ENCODE measurements at regions of chr13 and their contacts with region 1.

Region 1: GRCh38 chr13:22082437-22083100 is 411.7 kb downstream of the FGF9 start:
- DNase-seq: no peak
- H3K4me3 ChIP-seq: no peak overlapping the region
- H3K4me3 Mint-ChIP-seq: peak overlapping the region; percentile 2
- H3K27ac Mint-ChIP-seq: peak overlapping the region; percentile 13
- H3K4me1 ChIP-seq: peaks cover 12% of the 10 kb centered on the region
- H3K4me1 Mint-ChIP-seq: peaks cover 9% of the 10 kb centered on the region
- H3K27me3 ChIP-seq: no peaks in the 10 kb centered on the region
- H3K27me3 Mint-ChIP-seq: no peaks in the 10 kb centered on the region
- CTCF ChIP-seq: no peak

Region 2: DNA sequence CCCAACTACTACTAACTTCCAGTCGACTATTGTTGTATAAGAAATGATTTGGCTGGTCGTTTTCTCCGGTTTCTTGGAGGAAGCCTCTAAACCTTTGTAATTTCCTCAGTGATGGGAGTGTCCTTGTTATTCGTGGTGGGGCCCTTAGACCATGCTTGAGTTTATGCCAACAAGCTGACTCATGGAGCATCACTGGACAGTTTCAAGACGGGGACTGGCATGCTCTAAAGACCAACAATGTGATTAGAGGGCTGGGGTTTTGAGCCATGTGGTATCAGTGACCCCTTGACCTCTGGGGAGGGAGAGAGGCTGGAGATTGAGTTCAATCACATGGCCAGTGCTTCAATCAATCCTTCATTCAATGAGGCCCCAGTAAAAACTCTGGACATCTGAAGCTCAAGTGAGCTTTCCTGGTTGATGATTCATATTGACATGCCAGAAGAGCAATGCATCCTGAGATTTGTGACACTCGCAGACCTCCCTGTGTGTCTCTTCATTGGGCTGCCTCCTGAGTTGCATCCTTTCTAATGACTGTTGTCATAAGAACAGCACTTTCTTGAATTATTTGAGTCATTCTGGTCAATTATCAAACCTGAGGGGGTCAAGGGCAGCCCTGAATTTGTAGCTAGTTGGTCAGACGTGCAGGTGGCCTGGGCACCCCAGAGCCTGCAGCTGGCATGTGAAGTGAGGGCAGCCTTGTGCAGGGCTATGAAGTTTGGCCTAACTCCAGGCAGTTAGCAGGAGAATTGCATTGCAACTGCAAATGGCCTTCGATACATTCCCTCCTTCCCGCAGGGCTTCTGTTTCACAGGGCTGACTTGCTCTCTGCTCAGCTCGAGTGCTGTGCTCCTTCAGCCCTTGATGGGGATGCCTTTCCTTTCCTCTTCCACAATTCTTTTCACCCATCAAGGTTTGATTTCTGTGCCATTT is 165.2 kb before region 1 on chr13:
- CTCF ChIA-PET with region 1: no interaction called
- POLR2A ChIA-PET with region 1: no interaction called
- intact Hi-C with region 1: no loop called
- DNase-seq: no peak
- H3K4me3 ChIP-seq: no peak overlapping the region
- H3K4me3 Mint-ChIP-seq: no peak overlapping the region
- H3K27ac Mint-ChIP-seq: no peak overlapping the region
- H3K4me1 ChIP-seq: no peaks in the 10 kb centered on the region
- H3K4me1 Mint-ChIP-seq: peaks cover 5% of the 10 kb centered on the region
- H3K27me3 ChIP-seq: no peaks in the 10 kb centered on the region
- H3K27me3 Mint-ChIP-seq: no peaks in the 10 kb centered on the region
- CTCF ChIP-seq: no peak

Region 3: DNA sequence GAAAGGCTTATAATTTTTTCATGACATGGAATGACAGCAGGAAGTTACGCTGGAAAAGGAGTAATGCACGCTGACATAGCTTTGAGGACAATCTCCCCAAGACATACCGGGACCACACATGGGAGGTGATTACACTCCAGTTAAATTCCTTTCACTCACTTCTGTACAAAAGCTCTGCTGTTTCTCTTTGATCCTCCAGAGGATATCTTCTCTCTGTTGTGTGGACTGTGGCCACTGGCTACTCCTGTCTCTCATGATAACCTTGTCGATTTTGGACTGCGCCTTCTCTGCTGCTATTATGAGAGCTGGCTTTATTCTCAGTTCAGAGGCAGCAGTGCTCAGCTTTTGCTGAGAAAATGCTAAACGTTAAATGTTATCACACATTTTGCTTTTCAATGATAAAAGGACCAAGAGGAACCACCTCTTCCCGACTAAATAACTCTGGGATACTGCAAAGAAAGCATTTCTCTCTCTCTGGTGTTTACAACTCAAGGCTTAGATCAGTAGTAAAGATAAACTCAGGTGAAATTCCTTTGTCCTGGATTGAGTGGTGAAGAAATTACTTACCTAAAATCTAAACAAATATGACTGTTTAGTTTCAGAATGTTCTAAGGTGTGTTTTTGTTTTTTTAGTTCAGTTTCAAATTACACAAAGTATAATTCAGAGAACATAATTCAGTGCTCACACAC is 53.0 kb after region 1 on chr13:
- CTCF ChIA-PET with region 1: no interaction called
- POLR2A ChIA-PET with region 1: no interaction called
- intact Hi-C with region 1: loop called (anchors 1 kb)
- DNase-seq: peak; percentile 61 to 66
- H3K4me3 ChIP-seq: no peak overlapping the region
- H3K4me3 Mint-ChIP-seq: peak overlapping the region; percentile 20
- H3K27ac Mint-ChIP-seq: peak overlapping the region; percentile 10
- H3K4me1 ChIP-seq: peaks cover 34% of the 10 kb centered on the region
- H3K4me1 Mint-ChIP-seq: peaks cover 43% of the 10 kb centered on the region
- H3K27me3 ChIP-seq: no peaks in the 10 kb centered on the region
- H3K27me3 Mint-ChIP-seq: no peaks in the 10 kb centered on the region
- CTCF ChIP-seq: no peak

Region 4: GRCh38 chr13:22405891-22406290 is 323.3 kb after region 1 on chr13:
- CTCF ChIA-PET with region 1: no interaction called
- POLR2A ChIA-PET with region 1: no interaction called
- intact Hi-C with region 1: no loop called
- DNase-seq: no peak
- H3K4me3 ChIP-seq: no peak overlapping the region
- H3K4me3 Mint-ChIP-seq: no peak overlapping the region
- H3K27ac Mint-ChIP-seq: no peak overlapping the region
- H3K4me1 ChIP-seq: no peaks in the 10 kb centered on the region
- H3K4me1 Mint-ChIP-seq: no peaks in the 10 kb centered on the region
- H3K27me3 ChIP-seq: no peaks in the 10 kb centered on the region
- H3K27me3 Mint-ChIP-seq: peaks cover 4% of the 10 kb centered on the region
- CTCF ChIP-seq: no peak

Measured in Caco-2 (cell line).